OCI-LY7 (cell line): ENCODE measurements at regions of chr3 and their contacts with region 1.

Region 1: GRCh38 chr3:184250167-184250828 is 826 bp downstream of the EEF1AKMT4 start:
- DNase-seq: peak; percentile 94
- H3K4me3 ChIP-seq: peak overlapping the region; percentile 81
- H3K27ac ChIP-seq: peak overlapping the region; percentile 83
- H3K4me1 ChIP-seq: peaks cover 8% of the 10 kb centered on the region
- CTCF ChIP-seq: peak; percentile 96

Region 2: DNA sequence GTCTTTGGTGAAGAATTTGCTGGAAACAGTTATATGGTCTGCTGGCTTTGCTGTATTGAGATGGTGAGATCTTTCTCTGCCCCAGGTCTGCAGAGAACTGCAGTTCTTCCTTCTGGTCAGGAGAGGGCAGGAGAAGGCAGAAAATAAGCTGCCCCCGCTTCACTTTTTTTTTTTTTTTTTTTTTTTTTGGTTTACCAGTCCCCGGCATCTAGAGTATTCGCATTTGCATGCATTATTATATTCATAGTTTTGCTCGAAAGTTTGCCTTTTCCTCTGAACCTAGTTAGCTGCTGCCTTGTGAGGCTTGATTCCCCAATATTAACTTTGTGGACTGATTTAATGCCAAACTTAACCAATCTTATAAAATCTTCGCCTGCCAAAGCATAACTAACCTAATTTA is 355.0 kb before region 1 on chr3:
- CTCF ChIA-PET with region 1: interaction called, 3 read pairs
- POLR2A ChIA-PET with region 1: interaction called, 5 read pairs
- intact Hi-C with region 1: loop called (anchors 1 kb)
- DNase-seq: peak; percentile 72
- H3K4me3 ChIP-seq: no peak overlapping the region
- H3K27ac ChIP-seq: no peak overlapping the region
- H3K4me1 ChIP-seq: peaks cover 5% of the 10 kb centered on the region
- CTCF ChIP-seq: peak; percentile 92

Region 3: DNA sequence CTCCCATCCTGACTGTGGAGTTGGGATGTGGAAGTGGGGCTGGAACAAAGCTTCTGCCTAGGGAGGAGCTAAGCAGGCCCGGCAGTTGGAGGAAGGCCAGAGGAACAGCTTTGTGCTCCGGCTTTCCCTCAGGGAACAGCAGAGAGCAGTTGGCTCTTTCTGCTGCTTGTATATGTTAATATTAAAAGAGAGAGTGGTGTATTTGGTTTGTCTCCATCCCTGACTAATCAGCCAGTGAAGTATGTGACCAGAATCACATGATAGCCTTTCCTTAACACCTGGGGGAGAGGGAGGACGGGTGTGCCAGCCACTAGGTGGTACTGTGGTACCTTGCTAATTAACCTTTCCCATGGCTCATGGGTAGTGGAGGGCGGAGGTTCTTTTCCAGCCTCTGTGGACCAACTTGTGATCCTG is 105.2 kb before region 1 on chr3:
- CTCF ChIA-PET with region 1: no interaction called
- POLR2A ChIA-PET with region 1: interaction called, 3 read pairs
- intact Hi-C with region 1: loop called (anchors 1 kb)
- DNase-seq: peak; percentile 66
- H3K4me3 ChIP-seq: no peak overlapping the region
- H3K27ac ChIP-seq: no peak overlapping the region
- H3K4me1 ChIP-seq: peaks cover 12% of the 10 kb centered on the region
- CTCF ChIP-seq: peak; percentile 79

Region 4: GRCh38 chr3:184185461-184186308 is 64.6 kb before region 1 on chr3 and contains the start of gene ABCF3:
- CTCF ChIA-PET with region 1: no interaction called
- POLR2A ChIA-PET with region 1: no interaction called
- intact Hi-C with region 1: loop called (anchors 5 kb)
- DNase-seq: peak; percentile 99
- H3K4me3 ChIP-seq: peak within 1 kb of the TSS; percentile 97
- H3K27ac ChIP-seq: peak within 1 kb of the TSS; percentile 43
- H3K4me1 ChIP-seq: peaks cover 16% of the 10 kb centered on the region
- CTCF ChIP-seq: no peak
- total RNA-seq, gene ABCF3: 38.9 and 51.6 TPM in 2 replicates

Region 5: GRCh38 chr3:184235381-184236032 is 14.8 kb before region 1 on chr3:
- CTCF ChIA-PET with region 1: no interaction called
- POLR2A ChIA-PET with region 1: no interaction called
- intact Hi-C with region 1: no loop called
- DNase-seq: no peak
- H3K4me3 ChIP-seq: no peak overlapping the region
- H3K27ac ChIP-seq: no peak overlapping the region
- H3K4me1 ChIP-seq: peaks cover 7% of the 10 kb centered on the region
- CTCF ChIP-seq: no peak

Region 6: DNA sequence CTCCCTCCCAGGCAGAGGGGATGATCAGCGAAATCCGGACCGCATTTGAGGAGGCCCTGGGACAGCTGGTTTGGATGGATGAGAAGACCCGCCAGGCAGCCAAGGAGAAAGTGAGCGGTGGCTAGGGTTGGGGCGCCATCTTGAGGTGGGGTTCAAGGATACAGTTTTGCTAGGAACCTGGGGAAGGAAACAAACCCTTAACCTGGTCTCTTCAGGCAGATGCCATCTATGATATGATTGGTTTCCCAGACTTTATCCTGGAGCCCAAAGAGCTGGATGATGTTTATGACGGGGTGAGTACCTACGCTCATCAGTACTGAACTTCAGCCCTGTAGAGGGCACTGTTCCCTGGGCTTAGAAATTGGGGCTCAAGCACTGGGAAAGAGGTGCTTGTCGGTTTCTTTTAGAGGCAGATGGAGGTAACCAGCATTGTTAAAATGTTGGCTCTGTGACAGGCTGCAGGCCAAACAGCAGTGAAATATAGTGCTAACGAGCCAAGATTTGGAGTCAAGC is 39.2 kb after region 1 on chr3:
- CTCF ChIA-PET with region 1: no interaction called
- POLR2A ChIA-PET with region 1: no interaction called
- intact Hi-C with region 1: loop called (anchors 5 kb)
- DNase-seq: peak; percentile 65
- H3K4me3 ChIP-seq: no peak overlapping the region
- H3K27ac ChIP-seq: no peak overlapping the region
- H3K4me1 ChIP-seq: no peaks in the 10 kb centered on the region
- CTCF ChIP-seq: peak; percentile 90

Region 7: GRCh38 chr3:184298759-184299496 is 48.6 kb after region 1 on chr3 and contains the start of gene PSMD2:
- CTCF ChIA-PET with region 1: no interaction called
- POLR2A ChIA-PET with region 1: interaction called, 3 read pairs
- intact Hi-C with region 1: loop called (anchors 1 kb)
- DNase-seq: peak; percentile 97
- H3K4me3 ChIP-seq: peak within 1 kb of the TSS; percentile 96
- H3K27ac ChIP-seq: peak within 1 kb of the TSS; percentile 24
- H3K4me1 ChIP-seq: peaks cover 12% of the 10 kb centered on the region
- CTCF ChIP-seq: no peak
- total RNA-seq, gene PSMD2: 158 and 205 TPM in 2 replicates

Region 8: GRCh38 chr3:184362668-184363540 is 112.6 kb after region 1 on chr3:
- CTCF ChIA-PET with region 1: no interaction called
- POLR2A ChIA-PET with region 1: no interaction called
- intact Hi-C with region 1: loop called (anchors 2 kb)
- DNase-seq: peak; percentile 99
- H3K4me3 ChIP-seq: peak overlapping the region; percentile 97
- H3K27ac ChIP-seq: peak overlapping the region; percentile 55
- H3K4me1 ChIP-seq: peaks cover 23% of the 10 kb centered on the region
- CTCF ChIP-seq: peak; percentile 76